Heart right ventricle (tissue), 16 donors: ENCODE measurements at regions of chr11 and their contacts with region 1.

Region 1: DNA sequence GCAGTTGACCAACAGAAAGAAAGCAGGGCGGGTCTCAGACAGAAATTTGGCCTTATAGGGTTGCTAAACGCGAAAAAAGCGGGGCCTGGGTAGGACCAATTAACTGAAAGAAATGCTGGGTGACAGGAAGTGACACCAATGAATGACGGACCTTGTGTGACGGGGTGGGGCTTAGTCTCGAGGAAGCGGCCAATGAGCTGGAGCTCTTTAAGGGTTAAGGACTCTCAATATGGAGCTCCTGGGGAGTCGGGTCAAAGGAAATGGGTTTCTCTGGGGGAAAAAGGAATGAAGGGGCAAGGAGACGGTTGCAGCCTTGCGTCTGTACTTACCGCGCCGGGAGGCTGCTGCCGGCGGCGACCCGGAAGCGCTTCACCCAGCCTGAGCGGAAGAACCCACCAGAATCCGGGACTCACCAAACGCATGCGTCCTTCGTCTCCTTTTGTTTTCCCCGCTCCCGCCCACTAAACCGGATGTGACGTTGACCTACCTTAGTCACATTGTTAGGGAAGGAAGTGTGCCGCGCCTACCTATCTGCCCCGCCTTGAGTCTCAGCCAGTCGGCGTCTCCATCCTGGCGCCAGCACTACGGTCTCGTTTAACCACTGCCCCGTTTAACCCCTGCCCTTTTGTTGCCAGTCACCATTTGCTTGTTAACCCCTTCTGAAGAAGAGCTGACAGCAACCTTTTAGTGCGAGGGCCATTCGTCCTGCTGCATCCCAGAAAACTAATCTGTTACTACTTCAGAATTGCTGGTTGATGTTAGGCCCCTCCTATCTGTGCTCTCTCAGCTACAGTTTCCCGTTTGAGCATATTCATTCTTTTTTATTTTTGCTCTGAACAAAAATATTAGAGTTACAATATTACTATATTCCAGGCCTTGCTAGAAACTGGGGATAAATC is at the start of gene ANAPC15:
- DNase-seq: peak; percentile 93 to 100
- ATAC-seq: peak; percentile 94 to 98 (median 96)
- H3K4me3 ChIP-seq: peak within 1 kb of the TSS; percentile 37 to 84 (median 58)
- H3K27ac ChIP-seq: peak within 1 kb of the TSS; percentile 88 to 100 (median 96)
- H3K4me1 ChIP-seq: peaks cover 4 to 21% (median 15%) of the 10 kb centered on the region in 9 donors
- H3K27me3 ChIP-seq: peaks cover 0 to 10% (median 0%) of the 10 kb centered on the region in 7 donors
- CTCF ChIP-seq: peak in 2 of 9 donors; percentile 11 to 16
- total RNA-seq, gene ANAPC15: 31.8 to 58.3 (median 46.8) TPM

Region 2: DNA sequence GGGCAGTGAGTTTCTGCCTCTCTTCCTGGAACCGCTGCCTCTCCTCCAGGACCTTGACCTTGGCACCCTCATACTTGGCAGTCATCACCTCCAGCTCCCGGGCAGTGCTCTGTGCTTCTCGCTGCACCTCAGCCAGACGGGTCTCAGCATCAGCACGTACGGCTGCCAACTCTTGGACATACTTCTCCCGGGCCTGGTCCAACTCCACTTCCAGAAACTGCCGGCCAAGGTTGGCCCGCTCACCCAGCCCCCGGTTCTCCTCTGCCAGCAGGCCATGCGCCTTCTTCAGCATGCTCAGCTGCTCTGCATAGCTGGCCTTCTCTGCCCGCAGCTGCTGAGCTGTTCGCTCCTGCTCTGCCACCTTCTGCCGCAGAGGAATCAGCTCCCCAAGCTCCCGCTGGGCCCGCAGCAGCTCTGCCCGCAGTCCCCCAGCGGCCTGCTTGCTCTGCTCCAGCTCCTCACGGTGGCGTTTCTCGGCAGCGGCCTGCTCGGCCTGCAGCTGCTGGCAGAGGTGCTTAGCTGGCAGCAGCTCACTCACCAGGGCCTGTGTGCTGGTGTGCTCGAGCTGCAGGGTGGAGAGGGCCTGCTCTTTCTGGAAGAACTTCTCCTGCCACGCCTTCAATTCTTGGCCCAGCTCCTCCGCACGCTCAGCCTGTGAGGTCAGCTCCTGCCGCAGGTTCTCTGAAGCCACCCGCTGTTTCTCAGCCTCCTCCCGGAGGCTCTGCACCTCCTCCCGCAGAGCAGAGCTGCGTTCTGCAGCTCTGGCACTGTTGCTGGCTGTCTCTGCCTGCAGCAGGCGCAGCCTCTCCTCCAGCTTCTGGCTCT is 99.5 kb before region 1 on chr11:
- intact Hi-C with region 1: no loop called
- DNase-seq: peak; percentile 71 to 72
- ATAC-seq: peak; percentile 67 to 87 (median 80)
- H3K4me3 ChIP-seq: no peak overlapping the region
- H3K27ac ChIP-seq: peak overlapping the region in 9 of 10 donors; percentile 23 to 76 (median 53)
- H3K4me1 ChIP-seq: peaks cover 33 to 55% (median 43%) of the 10 kb centered on the region in 9 donors
- H3K27me3 ChIP-seq: no peaks in the 10 kb centered on the region
- CTCF ChIP-seq: peak in 2 of 9 donors; percentile 12 to 18

Region 3: DNA sequence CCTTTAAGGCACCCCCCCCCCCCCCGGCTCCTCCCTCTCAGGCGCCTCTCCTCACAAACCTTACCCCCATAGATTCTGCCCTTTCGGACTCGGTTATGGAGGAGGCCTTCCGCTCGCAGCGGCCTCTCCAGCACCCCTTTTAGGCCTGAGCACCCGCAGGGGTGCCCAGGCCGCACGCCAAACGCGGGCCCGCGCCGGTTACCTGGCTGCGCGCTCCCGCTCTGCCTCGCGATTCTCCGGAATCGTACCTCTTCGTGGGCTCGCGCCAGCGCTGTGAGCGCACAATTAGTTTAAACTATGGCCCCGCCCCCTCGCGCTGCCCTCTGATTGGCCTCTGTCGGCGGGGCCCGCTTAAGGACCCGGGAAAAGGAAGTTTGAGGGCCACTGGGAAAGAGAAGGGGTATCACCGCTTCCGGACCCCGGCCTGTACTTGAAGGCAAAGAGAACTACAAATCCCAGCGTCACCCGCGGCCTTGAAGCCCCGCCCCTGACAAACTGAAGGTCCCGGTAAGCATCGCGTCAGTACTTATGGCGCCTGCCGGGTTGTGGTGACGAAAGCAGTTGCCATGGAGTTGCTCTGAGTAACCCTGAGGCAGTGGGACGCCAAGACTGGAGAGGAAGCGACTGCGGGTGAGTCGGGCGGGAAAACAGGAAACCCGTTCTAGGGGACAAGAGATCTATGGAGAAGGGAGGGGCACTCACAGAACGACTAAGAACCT is 32.2 kb before region 1 on chr11 and contains the starts of genes LRRC51 and NUMA1:
- intact Hi-C with region 1: loop called in 3 of 10 experiments (anchors 1 kb)
- DNase-seq: peak; percentile 97 to 100
- ATAC-seq: peak; percentile 97 to 99 (median 98)
- H3K4me3 ChIP-seq: peak within 1 kb of the TSS; percentile 43 to 89 (median 74)
- H3K27ac ChIP-seq: peak within 1 kb of the TSS; percentile 67 to 95 (median 87)
- H3K4me1 ChIP-seq: peaks cover 0 to 40% (median 15%) of the 10 kb centered on the region in 9 donors
- H3K27me3 ChIP-seq: no peaks in the 10 kb centered on the region
- CTCF ChIP-seq: no peak
- total RNA-seq, gene LRRC51: 2.3 to 9.1 (median 4.7) TPM
- total RNA-seq, gene NUMA1: 60.8 to 117 (median 83.4) TPM

Region 4: GRCh38 chr11:72222907-72223614 is 110.5 kb after region 1 on chr11:
- intact Hi-C with region 1: loop called in 3 of 10 experiments (anchors 1 to 5 kb)
- DNase-seq: peak; percentile 95 to 96
- ATAC-seq: peak; percentile 89 to 96 (median 93)
- H3K4me3 ChIP-seq: peak overlapping the region; percentile 57 to 94 (median 84)
- H3K27ac ChIP-seq: peak overlapping the region; percentile 94 to 100 (median 99)
- H3K4me1 ChIP-seq: peaks cover 5 to 55% (median 21%) of the 10 kb centered on the region in 9 donors
- H3K27me3 ChIP-seq: peaks cover 0 to 5% (median 0%) of the 10 kb centered on the region in 7 donors
- CTCF ChIP-seq: peak in 8 of 9 donors; percentile 21 to 67 (median 52)